ENCODE measurements at regions of chr19 and their contacts with region 1.

Region 1: GRCh38 chr19:4524808-4525562 is 6.7 kb upstream of the PLIN4 start:
- DNase-seq: peak; percentile 49 to 74
- ATAC-seq: peak in 5 of 8 donors; percentile 30 to 64 (median 47)
- H3K4me3 ChIP-seq: peak overlapping the region in 2 of 10 donors; percentile 3 to 21
- H3K27ac ChIP-seq: no peak overlapping the region
- H3K4me1 ChIP-seq: peaks cover 0 to 12% (median 1%) of the 10 kb centered on the region in 9 donors
- H3K27me3 ChIP-seq: no peaks in the 10 kb centered on the region
- CTCF ChIP-seq: peak; percentile 57 to 84 (median 71)

Region 2: GRCh38 chr19:4267101-4267900 is 257.7 kb before region 1 on chr19:
- intact Hi-C with region 1: loop called in 3 of 10 experiments (anchors 10 kb)
- DNase-seq: peak; percentile 34 to 53
- ATAC-seq: peak; percentile 57 to 72 (median 66)
- H3K4me3 ChIP-seq: no peak overlapping the region
- H3K27ac ChIP-seq: no peak overlapping the region
- H3K4me1 ChIP-seq: no peaks in the 10 kb centered on the region
- H3K27me3 ChIP-seq: no peaks in the 10 kb centered on the region
- CTCF ChIP-seq: peak; percentile 71 to 90 (median 85)

Region 3: GRCh38 chr19:4278419-4279266 is 246.3 kb before region 1 on chr19 and contains the start of gene SHD:
- intact Hi-C with region 1: loop called in 1 of 10 experiments (anchors 10 kb)
- DNase-seq: no peak
- ATAC-seq: peak in 2 of 8 donors; percentile 30 to 38
- H3K4me3 ChIP-seq: peak within 1 kb of the TSS in 9 of 10 donors; percentile 22 to 51 (median 44)
- H3K27ac ChIP-seq: no peak within 1 kb of the TSS
- H3K4me1 ChIP-seq: peaks cover 0 to 18% (median 13%) of the 10 kb centered on the region in 9 donors
- H3K27me3 ChIP-seq: peaks cover 19 to 64% (median 54%) of the 10 kb centered on the region in 7 donors
- CTCF ChIP-seq: no peak
- total RNA-seq, gene SHD: 0.17 to 0.37 (median 0.30) TPM in 3 of 10 donors, not detected in the others

Region 4: GRCh38 chr19:4400135-4400936 is 124.6 kb before region 1 on chr19 and contains the start of gene SH3GL1:
- intact Hi-C with region 1: no loop called
- DNase-seq: peak; percentile 91
- ATAC-seq: peak; percentile 55 to 82 (median 68)
- H3K4me3 ChIP-seq: peak within 1 kb of the TSS; percentile 57 to 99 (median 96)
- H3K27ac ChIP-seq: peak within 1 kb of the TSS; percentile 88 to 99 (median 96)
- H3K4me1 ChIP-seq: peaks cover 19 to 68% (median 55%) of the 10 kb centered on the region in 9 donors
- H3K27me3 ChIP-seq: no peaks in the 10 kb centered on the region
- CTCF ChIP-seq: peak; percentile 86 to 98 (median 94)
- total RNA-seq, gene SH3GL1: 13.1 to 33.4 (median 17.6) TPM

Region 5: DNA sequence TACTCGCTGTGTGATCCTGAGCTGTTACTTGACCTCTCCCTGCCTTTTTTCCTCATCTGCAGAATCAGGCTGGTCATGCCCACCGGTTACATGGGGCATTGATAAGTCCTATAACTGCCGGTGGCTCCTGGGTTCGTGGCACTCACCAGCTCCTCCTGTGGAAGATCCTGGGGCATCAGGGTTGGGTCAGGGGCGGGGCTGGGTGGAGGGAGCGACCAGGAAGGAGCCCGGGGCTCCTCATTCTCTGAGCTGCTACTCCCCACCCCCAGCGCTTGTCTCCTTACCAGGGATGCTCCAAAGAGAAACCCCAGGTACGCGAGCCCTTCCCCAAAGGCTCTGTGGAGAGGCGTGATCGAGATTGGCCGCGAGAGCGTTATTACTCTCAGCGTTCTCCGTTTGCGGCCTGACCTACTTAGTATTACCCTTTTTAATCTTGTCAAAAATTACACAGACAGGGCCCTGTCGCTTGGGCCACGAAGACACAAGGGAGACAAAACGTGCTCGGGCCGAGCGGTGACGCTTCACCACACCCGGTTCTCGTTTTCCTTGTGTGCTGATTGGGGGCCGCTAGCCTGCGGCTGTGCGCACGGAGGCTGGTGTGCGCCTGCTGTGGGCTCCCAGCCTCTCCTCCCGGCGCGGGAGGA is 42.1 kb before region 1 on chr19:
- intact Hi-C with region 1: no loop called
- DNase-seq: no peak
- ATAC-seq: no peak
- H3K4me3 ChIP-seq: no peak overlapping the region
- H3K27ac ChIP-seq: no peak overlapping the region
- H3K4me1 ChIP-seq: no peaks in the 10 kb centered on the region
- H3K27me3 ChIP-seq: no peaks in the 10 kb centered on the region
- CTCF ChIP-seq: no peak

Region 6: DNA sequence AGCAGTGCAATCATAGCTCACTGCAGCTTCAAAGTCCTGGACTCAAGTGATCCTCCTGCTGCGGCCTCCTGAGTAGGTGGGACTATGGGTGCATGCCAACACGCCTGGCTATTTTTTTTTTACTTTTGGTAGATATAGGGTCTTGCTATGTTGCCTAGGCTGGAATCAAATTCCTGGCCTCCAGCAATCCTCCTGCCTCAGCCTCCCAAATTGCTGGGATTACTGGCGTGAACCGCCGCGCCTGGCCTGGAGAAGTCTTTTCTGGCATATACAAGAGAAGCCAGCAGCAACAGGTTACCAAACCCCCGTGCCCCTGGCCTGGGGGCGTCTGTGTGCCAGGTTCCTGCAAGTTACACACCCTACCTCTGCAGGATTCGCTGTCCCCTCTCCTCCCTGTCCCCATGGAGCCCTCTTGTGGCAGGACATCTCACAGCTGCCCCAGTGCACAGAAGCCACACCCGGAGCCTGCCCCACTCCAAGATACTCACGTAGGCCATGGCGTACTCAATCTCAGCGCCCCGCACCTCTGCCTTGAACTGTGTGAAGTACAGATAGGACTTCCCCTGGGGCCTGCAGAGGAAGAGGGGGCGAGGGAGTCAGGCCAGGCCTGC is 135.3 kb after region 1 on chr19:
- intact Hi-C with region 1: no loop called
- DNase-seq: no peak
- ATAC-seq: peak in 5 of 8 donors; percentile 35 to 67 (median 52)
- H3K4me3 ChIP-seq: no peak overlapping the region
- H3K27ac ChIP-seq: no peak overlapping the region
- H3K4me1 ChIP-seq: peaks cover 0 to 3% (median 0%) of the 10 kb centered on the region in 9 donors
- H3K27me3 ChIP-seq: no peaks in the 10 kb centered on the region
- CTCF ChIP-seq: peak in 8 of 9 donors; percentile 22 to 52 (median 39)

Measured in heart right ventricle (tissue), 16 donors.